GM10248 (cell line): ENCODE measurements at regions of chr14 and their contacts with region 1.

Region 1: DNA sequence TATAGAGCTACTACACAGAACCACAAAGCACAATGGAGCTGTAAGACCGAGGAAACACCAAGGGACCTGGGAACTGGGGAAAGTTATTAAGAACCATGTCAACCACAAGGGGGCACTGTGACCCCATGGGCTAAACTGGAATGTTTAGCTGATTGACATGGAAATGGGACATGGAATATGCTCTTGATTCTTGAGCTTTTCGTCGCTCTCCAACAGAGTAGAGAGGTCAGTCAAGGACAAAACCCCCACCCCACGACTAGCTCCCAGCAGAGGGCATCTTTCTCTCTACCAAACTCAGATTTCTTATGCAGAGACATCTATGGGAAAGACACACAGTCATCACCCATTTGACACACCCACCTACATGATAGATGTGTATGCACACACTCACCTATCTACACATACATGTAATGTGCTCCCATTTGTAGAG is 10.1 kb downstream of the NDRG2 start:
- DNase-seq: peak; percentile 69
- CTCF ChIP-seq: peak; percentile 64

Region 2: GRCh38 chr14:20922474-20922873 is 92.3 kb before region 1 on chr14:
- CTCF ChIA-PET with region 1: no interaction called
- POLR2A ChIA-PET with region 1: no interaction called
- DNase-seq: no peak
- CTCF ChIP-seq: no peak

Region 3: DNA sequence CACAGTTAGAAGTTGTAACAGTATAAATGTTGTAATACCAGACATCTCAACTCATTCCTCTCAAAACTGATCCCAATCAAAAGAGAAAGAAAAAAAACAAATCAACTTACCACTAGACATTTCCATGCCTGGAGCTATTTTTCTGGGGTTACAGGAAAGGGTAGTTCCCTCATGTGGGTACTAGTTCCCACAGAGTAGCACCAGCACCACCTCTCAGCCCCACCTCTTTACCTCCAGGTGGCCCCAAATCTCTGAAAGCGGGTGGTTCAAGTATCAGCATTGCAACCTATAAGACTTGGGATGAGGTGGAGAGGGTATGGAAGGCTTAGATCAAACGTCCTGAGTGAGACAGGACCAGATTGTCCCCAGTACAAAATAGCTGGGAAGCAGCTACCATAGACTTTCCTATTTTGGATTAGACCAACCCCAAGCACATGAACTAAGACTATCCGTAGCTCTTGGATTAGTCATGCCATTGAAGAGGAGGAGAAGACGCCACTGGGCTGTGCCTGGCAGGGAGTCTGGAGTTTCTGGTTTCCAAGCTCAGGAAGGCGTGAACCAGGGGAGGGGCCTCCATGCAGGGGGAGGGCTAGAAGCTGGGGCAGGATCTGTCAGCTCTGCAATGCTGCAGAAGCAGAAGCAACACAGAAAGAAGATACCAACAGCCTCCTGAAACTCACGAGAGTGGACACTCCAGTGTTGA is 16.0 kb before region 1 on chr14 and contains the start of gene SLC39A2:
- CTCF ChIA-PET with region 1: interaction called, 65 read pairs
- POLR2A ChIA-PET with region 1: no interaction called
- DNase-seq: no peak
- CTCF ChIP-seq: no peak

Region 4: DNA sequence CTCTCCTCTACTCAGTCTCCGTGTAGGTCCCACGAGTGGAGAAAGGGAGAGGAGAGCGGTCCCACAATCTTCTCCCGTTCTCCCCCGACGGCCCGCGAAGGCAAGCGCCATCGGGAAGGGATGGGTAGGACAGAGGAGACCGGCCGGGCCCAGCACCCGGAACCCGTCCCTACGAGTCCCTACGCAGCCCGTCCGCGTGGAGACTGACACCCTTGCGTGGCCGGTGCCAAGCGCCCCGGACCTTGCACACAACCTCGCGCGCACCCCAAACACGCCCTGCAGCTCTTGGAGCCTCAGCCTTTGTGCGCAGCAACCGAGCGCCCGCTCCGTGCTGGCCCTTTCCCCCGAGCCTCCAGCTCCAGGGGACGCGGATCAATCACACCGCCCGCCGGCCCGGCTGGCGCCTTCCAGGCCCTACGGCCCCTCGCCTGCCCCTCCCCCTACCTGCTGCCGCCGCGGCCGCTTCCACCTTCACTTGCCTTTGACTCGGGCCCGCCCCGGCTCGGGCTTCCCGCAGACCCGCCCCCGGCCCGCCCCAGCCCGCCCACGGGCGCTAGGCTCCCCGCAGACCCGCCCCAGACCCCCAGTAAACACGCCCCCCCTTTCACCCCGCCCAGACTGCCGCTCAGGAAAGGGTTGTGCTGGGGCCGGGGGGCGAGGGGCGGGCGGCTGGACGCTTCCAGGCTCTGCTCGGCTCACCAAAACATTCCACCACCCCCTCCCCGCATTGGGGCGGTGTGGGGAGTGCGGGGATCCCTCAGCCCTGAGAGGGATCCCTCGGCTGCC is 10.0 kb after region 1 on chr14 and contains the start of gene NDRG2:
- CTCF ChIA-PET with region 1: interaction called, 21 read pairs
- POLR2A ChIA-PET with region 1: no interaction called
- DNase-seq: peak; percentile 72
- CTCF ChIP-seq: no peak

Region 5: GRCh38 chr14:21049271-21049673 is 34.5 kb after region 1 on chr14:
- CTCF ChIA-PET with region 1: interaction called, 28 read pairs
- POLR2A ChIA-PET with region 1: no interaction called
- DNase-seq: no peak
- CTCF ChIP-seq: no peak

Region 6: GRCh38 chr14:21071225-21072030 is 56.7 kb after region 1 on chr14:
- CTCF ChIA-PET with region 1: interaction called, 38 read pairs
- POLR2A ChIA-PET with region 1: no interaction called
- DNase-seq: peak; percentile 88
- CTCF ChIP-seq: no peak

Region 7: GRCh38 chr14:21103710-21104447 is 89.1 kb after region 1 on chr14:
- CTCF ChIA-PET with region 1: interaction called, 218 read pairs
- POLR2A ChIA-PET with region 1: interaction called, 3 read pairs
- DNase-seq: peak; percentile 94
- CTCF ChIP-seq: peak; percentile 69